Ascending aorta (tissue), 2 donors: ENCODE measurements at regions of chr6 and their contacts with region 1.

Region 1: GRCh38 chr6:44387346-44388133 is at the start of gene CDC5L:
- DNase-seq: peak; percentile 91 to 99
- H3K4me3 ChIP-seq: peak within 1 kb of the TSS; percentile 70 to 94
- H3K27ac ChIP-seq: peak within 1 kb of the TSS; percentile 89 to 91
- H3K4me1 ChIP-seq: peaks cover 0 to 17% of the 10 kb centered on the region in 2 donors
- H3K27me3 ChIP-seq: no peaks in the 10 kb centered on the region
- CTCF ChIP-seq: no peak
- total RNA-seq, gene CDC5L: 10.9 TPM

Region 2: DNA sequence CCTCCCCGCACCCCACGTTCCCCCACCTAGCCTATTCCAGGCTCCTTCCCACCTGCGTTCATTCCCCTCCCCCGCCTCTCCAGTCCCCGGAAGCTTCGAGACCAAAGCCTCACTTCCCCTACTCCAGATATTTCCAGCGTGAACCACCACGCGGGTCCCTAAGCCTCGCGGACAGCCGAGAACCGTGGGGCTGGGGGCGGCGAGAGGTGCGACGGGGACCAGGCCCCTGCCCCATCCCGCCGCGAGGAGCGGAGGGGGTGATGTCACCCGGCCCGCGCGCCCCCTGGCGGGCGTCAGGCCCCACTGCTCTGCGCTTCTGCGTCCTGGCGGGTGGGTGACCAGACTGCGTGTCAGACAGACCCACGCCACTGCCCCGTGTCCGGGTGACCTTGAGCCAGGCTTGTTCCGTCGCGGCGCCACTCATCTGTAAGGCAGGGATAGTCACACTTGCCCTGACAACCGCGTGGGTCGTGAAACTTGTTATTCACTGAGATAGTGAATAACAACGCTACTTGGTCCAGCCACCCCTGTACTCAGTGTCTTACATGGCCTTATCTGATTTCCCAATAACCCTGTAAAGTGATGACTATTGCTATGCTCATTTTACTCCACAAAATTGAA is 149.6 kb before region 1 on chr6:
- intact Hi-C with region 1: no loop called
- DNase-seq: peak; percentile 72 to 93
- H3K4me3 ChIP-seq: peak overlapping the region; percentile 51 to 79
- H3K27ac ChIP-seq: peak overlapping the region; percentile 97 to 100
- H3K4me1 ChIP-seq: peaks cover 25 to 50% of the 10 kb centered on the region in 2 donors
- H3K27me3 ChIP-seq: no peaks in the 10 kb centered on the region
- CTCF ChIP-seq: peak; percentile 97 to 99 (median 98)

Region 3: GRCh38 chr6:44312901-44313788 is 74.4 kb before region 1 on chr6 and contains the start of gene AARS2:
- intact Hi-C with region 1: loop called (anchors 5 kb)
- DNase-seq: peak; percentile 35 to 91
- H3K4me3 ChIP-seq: peak within 1 kb of the TSS; percentile 90 to 99
- H3K27ac ChIP-seq: peak within 1 kb of the TSS; percentile 52 to 76
- H3K4me1 ChIP-seq: peaks cover 0 to 5% of the 10 kb centered on the region in 2 donors
- H3K27me3 ChIP-seq: no peaks in the 10 kb centered on the region
- CTCF ChIP-seq: peak; percentile 92 to 98 (median 97)
- total RNA-seq, gene AARS2: 4.5 TPM

Region 4: DNA sequence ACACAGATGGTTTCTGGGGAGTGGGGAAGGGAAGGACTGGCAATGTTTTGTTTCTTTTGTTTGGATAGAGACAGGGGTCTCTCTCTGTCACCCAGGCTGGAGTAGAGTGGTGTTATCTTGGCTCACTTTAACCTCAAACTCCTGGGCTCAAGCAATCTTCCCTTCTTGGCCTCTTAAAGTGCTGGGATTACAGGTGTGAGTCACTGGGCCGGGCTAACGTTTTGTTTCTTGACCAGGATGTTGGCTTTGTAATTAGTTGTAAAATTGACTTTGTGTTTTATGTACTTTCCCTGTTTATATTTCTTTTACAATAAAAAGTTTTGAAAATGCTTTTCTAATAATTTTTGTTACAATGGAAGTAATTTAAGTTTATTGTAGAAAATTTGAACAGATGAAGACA is 34.2 kb before region 1 on chr6:
- intact Hi-C with region 1: no loop called
- DNase-seq: no peak
- H3K4me3 ChIP-seq: no peak overlapping the region
- H3K27ac ChIP-seq: no peak overlapping the region
- H3K4me1 ChIP-seq: no peaks in the 10 kb centered on the region
- H3K27me3 ChIP-seq: no peaks in the 10 kb centered on the region
- CTCF ChIP-seq: no peak

Region 5: GRCh38 chr6:46325561-46326530 is 1938.3 kb after region 1 on chr6:
- intact Hi-C with region 1: loop called (anchors 10 kb)
- DNase-seq: no peak
- H3K4me3 ChIP-seq: no peak overlapping the region
- H3K27ac ChIP-seq: peak overlapping the region in 1 of 2 donors; percentile 17
- H3K4me1 ChIP-seq: peaks cover 0 to 55% of the 10 kb centered on the region in 2 donors
- H3K27me3 ChIP-seq: no peaks in the 10 kb centered on the region
- CTCF ChIP-seq: no peak